ENCODE measurements at regions of chr2 and their contacts with region 1.

Region 1: GRCh38 chr2:74482801-74483674 is at the starts of genes CCDC142 and TTC31:
- DNase-seq: peak; percentile 89
- ATAC-seq: peak; percentile 95
- H3K4me3 ChIP-seq: peak within 1 kb of the TSS; percentile 97
- H3K27ac ChIP-seq: peak within 1 kb of the TSS; percentile 96
- H3K4me1 ChIP-seq: peaks cover 13% of the 10 kb centered on the region
- H3K27me3 ChIP-seq: no peaks in the 10 kb centered on the region; a peak in 1 of 4 replicates
- CTCF ChIP-seq: peak; percentile 93 to 97 (median 97)
- EP300 ChIP-seq: no peak
- POLR2A ChIP-seq: peak; percentile 83
- RAD21 ChIP-seq: peak; percentile 78
- polyA plus RNA-seq, gene CCDC142: 0.93 to 1.5 TPM
- polyA plus RNA-seq, gene TTC31: 6.5 to 7.2 TPM

Region 2: GRCh38 chr2:74406035-74406434 is 77.0 kb before region 1 on chr2:
- CTCF ChIA-PET with region 1: no interaction called
- POLR2A ChIA-PET with region 1: no interaction called
- RAD21 ChIA-PET with region 1: no interaction called
- SMC1A ChIA-PET with region 1: no interaction called
- in situ Hi-C with region 1: no loop called
- intact Hi-C with region 1: no loop called
- DNase-seq: peak; percentile 37
- ATAC-seq: peak; percentile 99
- H3K4me3 ChIP-seq: no peak overlapping the region
- H3K27ac ChIP-seq: no peak overlapping the region
- H3K4me1 ChIP-seq: peaks cover 5% of the 10 kb centered on the region; the same call in 1 of the 2 replicates
- H3K27me3 ChIP-seq: no peaks in the 10 kb centered on the region
- CTCF ChIP-seq: no peak
- EP300 ChIP-seq: no peak
- POLR2A ChIP-seq: no peak
- RAD21 ChIP-seq: no peak

Region 3: GRCh38 chr2:74472086-74472944 is 10.7 kb before region 1 on chr2 and contains the start of gene MRPL53:
- CTCF ChIA-PET with region 1: interaction called, 20 read pairs
- POLR2A ChIA-PET with region 1: interaction called, 22 read pairs
- RAD21 ChIA-PET with region 1: interaction called, 20 read pairs
- SMC1A ChIA-PET with region 1: interaction called, 11 read pairs
- in situ Hi-C with region 1: no loop called
- intact Hi-C with region 1: no loop called
- DNase-seq: peak; percentile 86
- ATAC-seq: peak; percentile 94
- H3K4me3 ChIP-seq: peak within 1 kb of the TSS; percentile 89
- H3K27ac ChIP-seq: peak within 1 kb of the TSS; percentile 93
- H3K4me1 ChIP-seq: 0 out of 2 replicates have a peak, but pooled peaks cover 6% of the 10 kb centered on the region
- H3K27me3 ChIP-seq: no peaks in the 10 kb centered on the region
- CTCF ChIP-seq: no peak
- EP300 ChIP-seq: no peak
- POLR2A ChIP-seq: peak; percentile 98
- RAD21 ChIP-seq: no peak
- polyA plus RNA-seq, gene MRPL53: 40.8 to 94.1 TPM

Region 4: GRCh38 chr2:74544634-74545033 is 61.6 kb after region 1 on chr2:
- CTCF ChIA-PET with region 1: interaction called, 15 read pairs
- POLR2A ChIA-PET with region 1: no interaction called
- RAD21 ChIA-PET with region 1: interaction called, 3 read pairs
- SMC1A ChIA-PET with region 1: no interaction called
- in situ Hi-C with region 1: no loop called
- intact Hi-C with region 1: loop called (anchors 1 kb)
- DNase-seq: no peak
- ATAC-seq: no peak
- H3K4me3 ChIP-seq: no peak overlapping the region
- H3K27ac ChIP-seq: no peak overlapping the region
- H3K4me1 ChIP-seq: peaks cover 12% of the 10 kb centered on the region
- H3K27me3 ChIP-seq: no peaks in the 10 kb centered on the region
- CTCF ChIP-seq: peak; percentile 33 to 41 (median 39); a peak in 4 of 6 replicates
- EP300 ChIP-seq: no peak
- POLR2A ChIP-seq: no peak
- RAD21 ChIP-seq: peak; percentile 46; the same call in 1 of the 2 replicates

Region 5: GRCh38 chr2:74573747-74574562 is 90.9 kb after region 1 on chr2:
- CTCF ChIA-PET with region 1: interaction called, 6 read pairs
- POLR2A ChIA-PET with region 1: interaction called, 5 read pairs
- RAD21 ChIA-PET with region 1: interaction called, 5 read pairs
- SMC1A ChIA-PET with region 1: interaction called, 14 read pairs
- in situ Hi-C with region 1: no loop called
- intact Hi-C with region 1: no loop called
- DNase-seq: peak; percentile 59
- ATAC-seq: peak; percentile 54
- H3K4me3 ChIP-seq: peak overlapping the region; percentile 13; the same call in 1 of the 2 replicates
- H3K27ac ChIP-seq: peak overlapping the region; percentile 43
- H3K4me1 ChIP-seq: peaks cover 77% of the 10 kb centered on the region
- H3K27me3 ChIP-seq: no peaks in the 10 kb centered on the region
- CTCF ChIP-seq: no peak
- EP300 ChIP-seq: no peak; a peak in 1 of 4 replicates
- POLR2A ChIP-seq: no peak
- RAD21 ChIP-seq: no peak

Region 6: GRCh38 chr2:74756356-74756890 is 273.4 kb after region 1 on chr2:
- CTCF ChIA-PET with region 1: no interaction called
- POLR2A ChIA-PET with region 1: no interaction called
- RAD21 ChIA-PET with region 1: no interaction called
- SMC1A ChIA-PET with region 1: no interaction called
- in situ Hi-C with region 1: no loop called
- intact Hi-C with region 1: no loop called
- DNase-seq: no peak
- ATAC-seq: peak; percentile 75
- H3K4me3 ChIP-seq: no peak overlapping the region
- H3K27ac ChIP-seq: no peak overlapping the region; the same call in 1 of the 2 replicates
- H3K4me1 ChIP-seq: no peaks in the 10 kb centered on the region
- H3K27me3 ChIP-seq: no peaks in the 10 kb centered on the region
- CTCF ChIP-seq: no peak
- EP300 ChIP-seq: no peak
- POLR2A ChIP-seq: no peak
- RAD21 ChIP-seq: no peak

Measured in GM12878 (cell line).